ENCODE measurements at regions of chr12 and their contacts with region 1.

Region 1: GRCh38 chr12:105741744-105742566 is 396.8 kb downstream of the NUAK1 start:
- DNase-seq: peak; percentile 47
- H3K4me3 ChIP-seq: no peak overlapping the region
- H3K27ac ChIP-seq: no peak overlapping the region
- H3K4me1 ChIP-seq: peaks cover 32% of the 10 kb centered on the region
- H3K27me3 ChIP-seq: peaks cover 50 to 60% of the 10 kb centered on the region in 2 experiments
- CTCF ChIP-seq: no peak
- POLR2A ChIP-seq: no peak

Region 2: DNA sequence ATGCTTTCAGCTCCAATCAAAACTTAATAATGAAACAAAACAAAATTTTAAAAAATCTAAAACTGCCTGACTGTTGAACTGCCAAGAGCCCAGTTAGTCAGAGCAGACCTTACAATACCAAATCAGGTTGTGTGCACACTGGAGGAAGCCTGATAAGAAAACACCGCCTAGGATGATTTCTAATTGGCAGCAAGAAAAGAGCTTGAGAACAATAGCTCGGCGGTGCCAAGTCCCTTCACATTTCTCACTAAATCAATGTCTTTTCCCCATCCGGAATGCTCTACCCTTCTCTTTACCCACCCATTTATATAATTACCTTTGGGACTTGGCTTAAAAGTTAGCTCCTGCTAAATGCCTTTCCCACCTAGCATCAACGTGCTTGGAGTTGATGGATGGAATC is 154.7 kb before region 1 on chr12:
- CTCF ChIA-PET with region 1: no interaction called
- POLR2A ChIA-PET with region 1: no interaction called
- dilution Hi-C with region 1: no loop called
- intact Hi-C with region 1: loop called (anchors 1 kb)
- DNase-seq: peak; percentile 94
- H3K4me3 ChIP-seq: no peak overlapping the region
- H3K27ac ChIP-seq: peak overlapping the region; percentile 51
- H3K4me1 ChIP-seq: peaks cover 29% of the 10 kb centered on the region
- H3K27me3 ChIP-seq: no peaks in the 10 kb centered on the region
- CTCF ChIP-seq: no peak
- POLR2A ChIP-seq: peak; percentile 59

Region 3: DNA sequence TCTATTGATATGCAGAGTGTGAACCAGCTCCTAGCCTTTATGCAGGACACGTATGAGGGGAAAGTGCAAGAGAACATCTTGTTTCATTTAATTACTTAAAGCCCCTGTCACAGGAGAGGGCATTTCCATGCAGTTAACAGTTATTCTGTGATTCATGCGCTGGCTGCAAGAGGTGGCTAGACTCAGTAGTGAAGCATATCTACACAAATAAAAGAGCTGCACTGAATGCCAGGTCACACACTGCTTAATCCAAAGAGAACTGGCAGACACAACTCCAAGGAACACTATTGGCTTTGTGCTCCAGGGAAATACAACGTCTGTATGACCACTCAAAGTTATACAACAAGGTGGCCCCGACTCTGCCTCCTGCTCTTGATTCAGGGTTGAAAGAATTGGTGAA is 17.3 kb before region 1 on chr12:
- CTCF ChIA-PET with region 1: interaction called, 3 read pairs
- POLR2A ChIA-PET with region 1: no interaction called
- dilution Hi-C with region 1: no loop called
- intact Hi-C with region 1: loop called (anchors 1 kb)
- DNase-seq: no peak
- H3K4me3 ChIP-seq: no peak overlapping the region
- H3K27ac ChIP-seq: no peak overlapping the region
- H3K4me1 ChIP-seq: no peaks in the 10 kb centered on the region
- H3K27me3 ChIP-seq: peaks cover 40 to 47% of the 10 kb centered on the region in 2 experiments
- CTCF ChIP-seq: no peak
- POLR2A ChIP-seq: no peak

Region 4: DNA sequence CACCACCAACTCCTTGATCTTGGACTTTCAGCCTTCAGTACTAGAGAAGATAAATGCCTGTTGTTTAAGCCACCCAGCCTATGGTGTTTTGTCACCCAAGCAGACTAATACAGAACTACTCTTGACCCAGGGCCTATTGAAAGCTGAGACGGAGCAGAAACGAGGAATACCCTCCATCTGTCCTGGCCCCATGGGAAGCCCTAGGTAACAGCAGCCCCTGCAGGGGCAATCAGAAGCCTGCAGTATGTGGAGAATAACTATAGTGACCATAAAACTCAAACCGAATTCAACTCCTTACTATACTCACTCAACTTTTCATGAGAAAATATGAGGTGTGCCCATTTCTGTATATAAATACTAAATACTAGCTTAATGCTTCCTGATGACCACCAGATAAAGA is 89.4 kb after region 1 on chr12:
- CTCF ChIA-PET with region 1: no interaction called
- POLR2A ChIA-PET with region 1: no interaction called
- dilution Hi-C with region 1: no loop called
- intact Hi-C with region 1: no loop called
- DNase-seq: no peak
- H3K4me3 ChIP-seq: no peak overlapping the region
- H3K27ac ChIP-seq: no peak overlapping the region
- H3K4me1 ChIP-seq: no peaks in the 10 kb centered on the region
- H3K27me3 ChIP-seq: peaks cover 0 to 3% of the 10 kb centered on the region in 2 experiments
- CTCF ChIP-seq: no peak
- POLR2A ChIP-seq: no peak

Region 5: DNA sequence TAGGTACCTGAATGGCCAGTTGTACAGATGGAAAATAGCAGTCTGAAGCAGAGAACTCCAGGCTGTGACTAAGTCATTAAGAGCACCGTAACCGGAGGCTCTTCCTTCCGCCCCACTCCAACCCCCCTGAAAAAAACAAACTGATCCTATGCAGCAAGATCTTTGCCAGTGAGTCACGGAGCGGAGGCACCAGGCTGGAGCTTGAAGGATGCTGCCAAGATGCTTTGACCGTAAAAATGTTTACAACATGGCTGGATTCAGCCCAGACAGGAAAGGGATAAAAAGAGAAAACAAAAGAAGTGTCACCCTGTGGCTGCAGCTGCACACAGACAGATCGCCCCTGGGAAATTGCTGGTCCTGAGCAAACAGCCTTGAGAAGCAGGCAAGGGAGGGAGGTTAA is 192.3 kb after region 1 on chr12:
- CTCF ChIA-PET with region 1: no interaction called
- POLR2A ChIA-PET with region 1: no interaction called
- dilution Hi-C with region 1: no loop called
- intact Hi-C with region 1: loop called (anchors 1 kb)
- DNase-seq: peak; percentile 96
- H3K4me3 ChIP-seq: no peak overlapping the region
- H3K27ac ChIP-seq: peak overlapping the region; percentile 90
- H3K4me1 ChIP-seq: peaks cover 35% of the 10 kb centered on the region
- H3K27me3 ChIP-seq: no peaks in the 10 kb centered on the region
- CTCF ChIP-seq: no peak
- POLR2A ChIP-seq: no peak

Region 6: DNA sequence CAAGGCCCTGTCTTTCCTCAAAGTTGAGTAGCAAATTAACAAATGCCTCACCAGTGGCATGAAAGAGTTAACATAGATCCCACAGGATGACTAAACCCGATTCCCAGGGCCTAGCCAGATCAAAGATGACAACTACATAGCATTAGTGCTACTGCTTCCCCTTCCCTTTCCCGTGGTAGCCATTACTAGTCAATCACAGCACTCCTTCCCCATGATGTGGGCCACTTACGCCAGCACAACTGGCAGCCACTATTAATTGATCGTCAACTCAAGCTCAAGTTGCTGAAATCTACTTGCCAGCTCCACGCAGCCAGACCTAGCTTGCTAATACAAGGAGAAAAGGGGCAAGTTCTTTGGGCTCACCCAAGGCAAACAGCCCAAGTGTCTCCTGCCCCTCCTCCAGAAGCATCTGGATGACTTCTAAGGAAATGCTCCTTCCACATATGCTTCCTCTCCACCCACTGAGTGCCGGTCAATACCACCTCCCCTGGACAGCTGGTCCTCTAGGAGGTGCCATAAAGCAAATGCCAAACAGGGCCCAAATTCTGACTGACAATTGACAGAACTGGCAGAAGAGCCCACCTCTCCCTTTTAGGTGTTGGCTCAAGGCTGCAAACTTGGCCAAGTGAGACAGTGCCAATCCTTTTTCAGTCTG is 324.2 kb after region 1 on chr12:
- CTCF ChIA-PET with region 1: no interaction called
- POLR2A ChIA-PET with region 1: no interaction called
- dilution Hi-C with region 1: no loop called
- intact Hi-C with region 1: loop called (anchors 1 kb)
- DNase-seq: peak; percentile 59
- H3K4me3 ChIP-seq: no peak overlapping the region
- H3K27ac ChIP-seq: peak overlapping the region; percentile 36
- H3K4me1 ChIP-seq: peaks cover 47% of the 10 kb centered on the region
- H3K27me3 ChIP-seq: no peaks in the 10 kb centered on the region
- CTCF ChIP-seq: no peak
- POLR2A ChIP-seq: no peak